GM12878 (cell line): ENCODE measurements at regions of chr12 and their contacts with region 1.

Region 1: DNA sequence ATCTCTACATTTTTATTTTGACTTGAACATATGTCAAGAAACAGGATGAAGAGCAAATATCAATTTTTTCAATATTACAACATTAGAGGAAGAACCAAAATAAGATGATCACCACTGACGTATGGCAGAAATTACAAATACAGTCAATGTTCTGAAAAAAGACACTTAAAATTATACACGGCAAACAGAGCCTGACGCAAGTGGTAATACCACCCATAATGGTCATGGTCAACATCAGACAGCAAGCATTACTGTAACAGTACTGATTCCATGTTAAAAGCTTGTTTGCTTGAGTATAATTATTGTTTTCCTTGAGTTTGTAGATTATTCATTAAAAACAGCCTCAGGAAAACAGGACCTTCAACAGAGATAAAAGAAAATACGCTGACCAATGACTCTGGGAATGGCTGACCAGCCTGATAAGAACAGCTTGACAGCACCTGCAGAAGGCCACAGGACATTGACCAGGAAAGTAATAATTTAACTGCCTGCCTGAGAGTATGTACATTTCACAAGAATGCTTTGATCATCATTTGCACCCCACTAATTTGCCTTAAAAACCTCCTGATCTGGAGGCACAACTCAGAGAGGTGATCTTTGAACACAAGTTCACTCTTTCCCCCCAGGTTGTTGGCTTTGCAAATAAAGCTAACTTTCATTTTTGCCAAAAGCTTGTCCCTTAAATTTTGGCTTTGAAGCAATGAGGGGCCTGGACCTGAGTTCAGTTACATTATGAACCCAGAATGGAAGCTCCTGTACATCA is 187.3 kb downstream of the IPO8 start:
- DNase-seq: no peak
- ATAC-seq: no peak
- H3K4me3 ChIP-seq: no peak overlapping the region
- H3K27ac ChIP-seq: no peak overlapping the region
- H3K4me1 ChIP-seq: no peaks in the 10 kb centered on the region
- H3K27me3 ChIP-seq: no peaks in the 10 kb centered on the region
- CTCF ChIP-seq: no peak
- EP300 ChIP-seq: no peak
- POLR2A ChIP-seq: no peak
- RAD21 ChIP-seq: no peak

Region 2: DNA sequence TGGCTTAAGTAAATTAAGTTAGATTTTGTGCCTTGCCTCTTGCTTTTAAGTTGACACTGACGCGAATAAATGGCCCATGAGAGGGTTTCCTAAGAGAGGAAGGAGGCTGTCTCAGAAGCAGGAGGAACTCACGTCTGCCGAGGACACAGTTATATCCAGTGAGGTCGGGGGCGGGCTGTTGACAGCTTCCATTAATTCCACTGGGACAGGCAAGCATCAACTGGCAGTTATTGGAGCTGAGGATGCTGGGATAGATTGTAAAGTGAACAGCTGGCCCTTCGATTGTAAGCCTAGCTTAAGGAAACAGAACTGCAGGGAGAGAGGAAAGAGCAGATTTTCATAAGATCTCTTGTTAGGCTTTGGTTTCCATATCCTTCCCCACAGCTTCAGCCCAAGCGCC is 211.9 kb before region 1 on chr12:
- CTCF ChIA-PET with region 1: no interaction called
- POLR2A ChIA-PET with region 1: no interaction called
- RAD21 ChIA-PET with region 1: no interaction called
- SMC1A ChIA-PET with region 1: no interaction called
- in situ Hi-C with region 1: no loop called
- intact Hi-C with region 1: no loop called
- DNase-seq: no peak
- ATAC-seq: no peak
- H3K4me3 ChIP-seq: no peak overlapping the region
- H3K27ac ChIP-seq: no peak overlapping the region
- H3K4me1 ChIP-seq: no peaks in the 10 kb centered on the region
- H3K27me3 ChIP-seq: no peaks in the 10 kb centered on the region
- CTCF ChIP-seq: no peak
- EP300 ChIP-seq: no peak
- POLR2A ChIP-seq: no peak
- RAD21 ChIP-seq: no peak

Region 3: DNA sequence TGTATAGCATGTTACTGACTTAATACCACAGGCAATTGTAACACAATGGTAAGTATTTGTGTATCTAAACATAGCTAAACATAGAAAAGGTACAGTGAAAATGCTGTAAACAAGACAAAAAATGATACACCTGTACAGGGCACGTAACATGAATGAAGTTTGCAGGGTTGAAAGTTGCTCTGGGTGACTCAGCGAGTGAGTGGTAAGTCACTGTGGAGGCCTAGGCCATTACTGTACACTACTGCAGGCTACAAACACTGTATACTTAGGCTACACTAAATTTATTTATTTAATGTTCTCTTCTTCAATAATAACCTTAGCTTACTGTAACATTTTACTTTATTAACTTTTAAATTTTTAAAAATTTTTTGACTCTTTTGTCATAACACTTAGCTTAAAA is 28.8 kb after region 1 on chr12:
- CTCF ChIA-PET with region 1: no interaction called
- POLR2A ChIA-PET with region 1: no interaction called
- RAD21 ChIA-PET with region 1: no interaction called
- SMC1A ChIA-PET with region 1: no interaction called
- in situ Hi-C with region 1: no loop called
- intact Hi-C with region 1: no loop called
- DNase-seq: no peak
- ATAC-seq: no peak
- H3K4me3 ChIP-seq: no peak overlapping the region
- H3K27ac ChIP-seq: no peak overlapping the region
- H3K4me1 ChIP-seq: no peaks in the 10 kb centered on the region
- H3K27me3 ChIP-seq: no peaks in the 10 kb centered on the region
- CTCF ChIP-seq: no peak
- EP300 ChIP-seq: no peak
- POLR2A ChIP-seq: no peak
- RAD21 ChIP-seq: no peak

Region 4: GRCh38 chr12:30564394-30564793 is 56.0 kb after region 1 on chr12:
- CTCF ChIA-PET with region 1: no interaction called
- POLR2A ChIA-PET with region 1: no interaction called
- RAD21 ChIA-PET with region 1: no interaction called
- SMC1A ChIA-PET with region 1: no interaction called
- in situ Hi-C with region 1: no loop called
- intact Hi-C with region 1: loop called (anchors 5 kb)
- DNase-seq: no peak
- ATAC-seq: no peak
- H3K4me3 ChIP-seq: no peak overlapping the region
- H3K27ac ChIP-seq: no peak overlapping the region
- H3K4me1 ChIP-seq: no peaks in the 10 kb centered on the region
- H3K27me3 ChIP-seq: no peaks in the 10 kb centered on the region
- CTCF ChIP-seq: no peak
- EP300 ChIP-seq: no peak
- POLR2A ChIP-seq: no peak
- RAD21 ChIP-seq: no peak